GM12878 (cell line): ENCODE measurements at regions of chr1 and their contacts with region 1.

Region 1: GRCh38 chr1:17119076-17119772 is at the start of gene PADI2:
- DNase-seq: no peak
- ATAC-seq: peak; percentile 93
- H3K4me3 ChIP-seq: peak within 1 kb of the TSS; percentile 63
- H3K27ac ChIP-seq: no peak within 1 kb of the TSS
- H3K4me1 ChIP-seq: peaks cover 8% of the 10 kb centered on the region; the same call in 1 of the 2 replicates
- H3K27me3 ChIP-seq: peaks cover 9 to 11% of the 10 kb centered on the region in 2 experiments; a peak in 3 of 4 replicates
- CTCF ChIP-seq: no peak
- EP300 ChIP-seq: no peak
- POLR2A ChIP-seq: no peak
- RAD21 ChIP-seq: no peak
- polyA plus RNA-seq, gene PADI2: 0.05 to 0.09 TPM

Region 2: DNA sequence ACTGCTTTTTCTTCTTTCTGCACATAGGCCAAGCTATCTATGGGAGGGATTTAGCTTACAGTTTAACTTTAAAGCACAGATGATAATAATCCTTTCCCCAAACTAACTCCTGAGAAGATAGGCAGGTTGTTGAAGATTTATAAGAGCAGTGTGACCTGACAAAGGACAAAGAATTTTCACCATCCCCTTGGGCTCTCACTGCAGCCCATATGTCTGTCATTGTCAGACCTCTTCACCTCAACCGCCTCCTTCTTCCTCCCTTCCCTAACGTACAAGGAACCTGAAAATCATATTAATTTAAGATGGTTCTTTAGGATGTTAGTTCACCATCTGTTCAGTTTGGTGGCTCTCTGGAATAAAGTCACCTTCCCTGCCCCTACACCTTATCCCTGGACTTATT is 218.5 kb before region 1 on chr1:
- CTCF ChIA-PET with region 1: no interaction called
- POLR2A ChIA-PET with region 1: no interaction called
- RAD21 ChIA-PET with region 1: no interaction called
- SMC1A ChIA-PET with region 1: no interaction called
- in situ Hi-C with region 1: no loop called
- intact Hi-C with region 1: no loop called
- DNase-seq: no peak
- ATAC-seq: no peak
- H3K4me3 ChIP-seq: no peak overlapping the region
- H3K27ac ChIP-seq: no peak overlapping the region
- H3K4me1 ChIP-seq: peaks cover 13% of the 10 kb centered on the region
- H3K27me3 ChIP-seq: no peaks in the 10 kb centered on the region
- CTCF ChIP-seq: no peak
- EP300 ChIP-seq: no peak
- POLR2A ChIP-seq: no peak
- RAD21 ChIP-seq: no peak

Region 3: DNA sequence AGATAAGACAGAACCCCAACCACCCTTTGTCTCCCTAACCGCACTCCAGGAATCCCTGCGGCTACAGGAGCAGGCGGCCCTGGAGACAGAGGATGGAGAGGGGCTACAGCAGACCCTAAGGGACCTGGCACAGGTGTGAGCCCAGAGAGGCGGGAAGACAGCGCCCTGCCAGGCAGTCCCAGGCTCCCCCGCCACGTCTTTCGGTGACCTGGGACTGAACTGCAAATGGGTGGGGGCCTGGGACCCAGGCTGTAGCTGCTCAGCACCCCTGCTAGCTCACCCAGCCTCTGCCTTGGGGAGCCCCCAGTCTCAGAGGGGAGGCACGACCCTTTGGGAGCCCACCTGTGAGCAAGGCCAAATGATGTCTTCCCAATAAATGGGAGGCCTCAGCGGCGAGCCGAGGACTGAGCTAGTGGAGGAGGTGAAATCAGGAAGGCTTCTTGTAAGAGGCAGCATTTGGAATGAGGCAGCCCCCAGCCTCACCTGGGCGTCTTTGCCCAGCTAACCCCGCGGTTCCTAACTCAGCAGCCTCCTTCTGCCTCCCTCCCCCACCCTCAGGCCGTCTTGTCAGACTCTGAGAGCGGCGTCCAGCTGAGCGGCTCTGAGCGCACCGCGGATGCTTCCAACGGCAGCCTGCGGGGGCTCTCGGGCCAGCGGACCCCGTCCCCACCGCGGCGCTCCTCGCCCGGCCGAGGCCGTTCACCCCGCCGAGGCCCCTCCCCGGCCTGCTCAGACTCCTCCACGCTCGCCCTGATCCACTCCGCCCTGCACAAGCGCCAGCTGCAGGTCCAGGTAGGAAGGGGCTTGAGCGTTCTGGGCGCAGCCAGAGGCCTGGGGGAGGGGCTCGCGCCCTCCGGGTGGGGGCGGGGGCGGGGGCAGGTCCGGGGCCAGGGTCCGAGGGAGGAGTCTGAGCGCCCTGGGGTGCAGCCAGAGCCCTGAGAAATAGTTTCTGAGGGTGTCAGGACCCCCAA is 180.6 kb before region 1 on chr1:
- CTCF ChIA-PET with region 1: no interaction called
- POLR2A ChIA-PET with region 1: no interaction called
- RAD21 ChIA-PET with region 1: no interaction called
- SMC1A ChIA-PET with region 1: no interaction called
- in situ Hi-C with region 1: no loop called
- intact Hi-C with region 1: no loop called
- DNase-seq: no peak
- ATAC-seq: no peak
- H3K4me3 ChIP-seq: no peak overlapping the region
- H3K27ac ChIP-seq: no peak overlapping the region
- H3K4me1 ChIP-seq: no peaks in the 10 kb centered on the region
- H3K27me3 ChIP-seq: no peaks in the 10 kb centered on the region
- CTCF ChIP-seq: no peak
- EP300 ChIP-seq: no peak
- POLR2A ChIP-seq: no peak
- RAD21 ChIP-seq: no peak

Region 4: DNA sequence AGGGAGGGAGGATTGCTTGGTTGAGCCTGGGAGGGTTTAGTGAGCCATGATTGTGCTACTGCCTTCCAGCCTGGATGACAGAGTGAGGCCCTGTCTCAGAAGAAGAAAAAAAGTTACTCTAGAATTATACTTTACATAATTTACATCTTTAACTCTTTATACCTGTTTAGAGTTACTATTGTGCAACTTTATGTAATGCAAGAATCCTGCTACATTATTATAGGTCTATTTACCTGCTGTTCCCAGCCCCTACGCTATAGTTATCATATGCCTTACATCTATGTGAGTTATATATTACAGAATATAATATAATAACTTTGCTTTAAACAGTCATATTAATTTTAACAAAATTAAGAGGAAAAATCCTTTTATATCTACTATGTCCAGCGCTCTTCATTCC is 79.7 kb before region 1 on chr1:
- CTCF ChIA-PET with region 1: no interaction called
- POLR2A ChIA-PET with region 1: no interaction called
- RAD21 ChIA-PET with region 1: no interaction called
- SMC1A ChIA-PET with region 1: no interaction called
- in situ Hi-C with region 1: no loop called
- intact Hi-C with region 1: no loop called
- DNase-seq: no peak
- ATAC-seq: no peak
- H3K4me3 ChIP-seq: no peak overlapping the region
- H3K27ac ChIP-seq: no peak overlapping the region
- H3K4me1 ChIP-seq: no peaks in the 10 kb centered on the region
- H3K27me3 ChIP-seq: no peaks in the 10 kb centered on the region
- CTCF ChIP-seq: no peak
- EP300 ChIP-seq: no peak
- POLR2A ChIP-seq: no peak
- RAD21 ChIP-seq: no peak

Region 5: GRCh38 chr1:17059739-17060460 is 59.3 kb before region 1 on chr1:
- CTCF ChIA-PET with region 1: interaction called, 171 read pairs
- POLR2A ChIA-PET with region 1: interaction called, 3 read pairs
- RAD21 ChIA-PET with region 1: interaction called, 53 read pairs
- SMC1A ChIA-PET with region 1: interaction called, 93 read pairs
- in situ Hi-C with region 1: loop called (anchors 5 kb)
- intact Hi-C with region 1: loop called (anchors 1 kb)
- DNase-seq: peak; percentile 30
- ATAC-seq: peak; percentile 100
- H3K4me3 ChIP-seq: no peak overlapping the region
- H3K27ac ChIP-seq: no peak overlapping the region
- H3K4me1 ChIP-seq: peaks cover 6% of the 10 kb centered on the region; the same call in 1 of the 2 replicates
- H3K27me3 ChIP-seq: no peaks in the 10 kb centered on the region
- CTCF ChIP-seq: peak; percentile 80 to 93 (median 81)
- EP300 ChIP-seq: no peak
- POLR2A ChIP-seq: no peak
- RAD21 ChIP-seq: peak; percentile 66

Region 6: DNA sequence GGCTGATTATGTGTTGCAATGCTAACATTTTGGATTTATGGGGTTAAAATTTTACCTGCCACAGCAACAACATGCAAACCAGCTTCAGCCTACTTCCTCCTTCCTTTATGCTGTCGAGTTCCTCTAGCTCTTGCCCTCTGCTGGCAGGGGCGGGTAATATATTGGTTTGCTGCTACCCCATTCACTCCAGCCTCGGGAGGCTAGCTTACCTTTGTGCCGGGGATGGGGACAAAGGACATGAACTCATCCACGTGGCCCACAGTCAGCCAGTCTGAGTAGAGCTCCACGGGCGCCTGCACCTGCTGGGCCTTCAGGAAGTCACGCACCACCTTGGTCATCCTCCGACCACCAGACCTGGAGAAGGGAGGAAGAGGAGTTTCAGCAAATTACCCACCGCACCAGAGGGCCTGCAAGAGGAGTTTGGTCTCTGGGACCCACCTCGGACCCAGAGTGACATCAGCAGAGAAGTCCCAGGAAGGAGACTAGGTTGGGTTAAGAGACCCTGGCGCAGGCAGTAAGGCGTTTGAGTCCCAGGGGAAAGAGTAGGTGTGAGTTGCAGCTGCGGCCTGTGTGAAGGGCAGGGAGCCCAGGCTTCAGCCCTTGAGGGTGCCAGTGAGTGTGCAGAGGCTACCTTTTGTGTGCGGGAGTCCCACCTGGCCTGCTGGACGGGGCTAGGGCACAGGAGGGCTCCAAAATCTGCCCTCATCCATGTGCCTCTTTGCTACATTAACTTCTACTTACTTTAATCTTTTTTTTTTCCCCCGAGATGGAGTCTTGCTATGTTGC is 43.6 kb before region 1 on chr1:
- CTCF ChIA-PET with region 1: interaction called, 4 read pairs
- POLR2A ChIA-PET with region 1: interaction called, 12 read pairs
- RAD21 ChIA-PET with region 1: interaction called, 8 read pairs
- SMC1A ChIA-PET with region 1: interaction called, 4 read pairs
- in situ Hi-C with region 1: no loop called
- intact Hi-C with region 1: loop called (anchors 5 kb)
- DNase-seq: no peak
- ATAC-seq: peak; percentile 92
- H3K4me3 ChIP-seq: no peak overlapping the region
- H3K27ac ChIP-seq: no peak overlapping the region
- H3K4me1 ChIP-seq: peaks cover 5% of the 10 kb centered on the region
- H3K27me3 ChIP-seq: no peaks in the 10 kb centered on the region
- CTCF ChIP-seq: peak; percentile 1 to 65 (median 41); a peak in 3 of 6 replicates
- EP300 ChIP-seq: no peak
- POLR2A ChIP-seq: no peak
- RAD21 ChIP-seq: 0 out of 2 replicates have a peak, but pooled peaks have one; percentile 14

Region 7: GRCh38 chr1:17080880-17081279 is 38.3 kb before region 1 on chr1:
- CTCF ChIA-PET with region 1: interaction called, 4 read pairs
- POLR2A ChIA-PET with region 1: interaction called, 12 read pairs
- RAD21 ChIA-PET with region 1: interaction called, 8 read pairs
- SMC1A ChIA-PET with region 1: interaction called, 4 read pairs
- in situ Hi-C with region 1: no loop called
- intact Hi-C with region 1: loop called (anchors 5 kb)
- DNase-seq: no peak
- ATAC-seq: no peak
- H3K4me3 ChIP-seq: no peak overlapping the region
- H3K27ac ChIP-seq: no peak overlapping the region
- H3K4me1 ChIP-seq: peaks cover 14% of the 10 kb centered on the region
- H3K27me3 ChIP-seq: 0 out of 4 replicates have a peak, but pooled peaks cover 0 to 1% of the 10 kb centered on the region in 2 experiments
- CTCF ChIP-seq: no peak
- EP300 ChIP-seq: no peak
- POLR2A ChIP-seq: no peak
- RAD21 ChIP-seq: no peak

Region 8: DNA sequence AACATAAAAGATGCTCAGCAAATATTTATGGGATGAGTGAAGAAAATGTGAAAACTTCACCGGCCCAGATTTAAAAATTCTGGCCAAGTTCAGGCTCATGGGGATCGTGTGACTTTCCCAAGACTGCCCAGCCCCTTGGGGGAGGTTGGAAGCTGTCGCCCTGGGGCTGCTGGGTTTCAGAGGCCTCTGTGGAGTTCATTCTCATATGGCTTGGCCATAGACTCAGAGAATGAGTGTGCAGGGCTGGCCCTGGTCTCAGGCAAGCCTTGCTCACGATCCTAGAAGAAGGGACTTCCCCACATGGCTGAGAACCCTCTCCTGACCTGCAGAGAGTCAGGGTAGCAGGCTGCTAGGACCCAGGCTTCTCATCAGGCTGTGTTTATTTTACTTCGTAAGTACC is 24.6 kb before region 1 on chr1:
- CTCF ChIA-PET with region 1: no interaction called
- POLR2A ChIA-PET with region 1: interaction called, 12 read pairs
- RAD21 ChIA-PET with region 1: interaction called, 8 read pairs
- SMC1A ChIA-PET with region 1: interaction called, 16 read pairs
- in situ Hi-C with region 1: no loop called
- intact Hi-C with region 1: no loop called
- DNase-seq: peak; percentile 35
- ATAC-seq: peak; percentile 94
- H3K4me3 ChIP-seq: no peak overlapping the region
- H3K27ac ChIP-seq: no peak overlapping the region
- H3K4me1 ChIP-seq: no peaks in the 10 kb centered on the region
- H3K27me3 ChIP-seq: no peaks in the 10 kb centered on the region; a peak in 1 of 4 replicates
- CTCF ChIP-seq: no peak
- EP300 ChIP-seq: no peak; a peak in 1 of 4 replicates
- POLR2A ChIP-seq: no peak
- RAD21 ChIP-seq: no peak

Region 9: DNA sequence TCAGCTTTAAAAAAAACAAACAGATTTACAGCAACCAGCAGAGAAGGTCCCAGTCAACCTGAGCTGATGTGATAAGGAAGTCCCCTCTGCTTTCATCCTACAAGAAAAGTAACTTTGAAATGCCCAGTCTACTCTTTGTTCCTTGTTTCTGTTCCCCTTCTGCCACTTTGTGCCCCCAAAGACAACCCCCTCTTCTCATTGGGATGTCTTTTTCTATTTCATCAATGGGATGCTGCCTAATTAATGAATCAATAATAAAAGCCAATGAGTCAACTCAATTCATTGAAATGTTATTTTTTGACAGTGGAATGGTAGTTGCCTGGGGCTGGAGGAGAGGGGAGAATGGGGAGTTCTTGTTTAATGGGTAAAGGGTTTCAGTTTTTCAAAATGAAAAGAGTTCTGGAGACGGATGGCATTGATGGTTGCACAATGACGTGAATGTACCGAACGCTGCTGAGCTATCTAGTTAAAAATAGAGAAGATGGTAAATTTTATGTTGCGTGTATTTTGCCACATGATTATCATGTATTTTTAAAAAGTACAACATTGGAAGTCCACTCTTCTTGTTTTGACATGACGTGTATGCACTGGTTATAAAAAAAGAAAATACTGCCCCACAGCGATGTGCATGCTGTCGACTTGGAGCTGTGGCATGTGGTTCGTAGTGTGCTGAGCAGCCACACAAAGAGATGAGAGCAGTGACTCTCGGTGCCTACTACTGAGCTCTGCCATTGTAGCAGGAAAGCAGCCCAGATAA is 22.4 kb after region 1 on chr1:
- CTCF ChIA-PET with region 1: interaction called, 105 read pairs
- POLR2A ChIA-PET with region 1: interaction called, 23 read pairs
- RAD21 ChIA-PET with region 1: interaction called, 58 read pairs
- SMC1A ChIA-PET with region 1: interaction called, 119 read pairs
- in situ Hi-C with region 1: no loop called
- intact Hi-C with region 1: no loop called
- DNase-seq: peak; percentile 85
- ATAC-seq: peak; percentile 90
- H3K4me3 ChIP-seq: no peak overlapping the region
- H3K27ac ChIP-seq: peak overlapping the region; percentile 78
- H3K4me1 ChIP-seq: peaks cover 15% of the 10 kb centered on the region
- H3K27me3 ChIP-seq: no peaks in the 10 kb centered on the region
- CTCF ChIP-seq: peak in 1 of 3 experiments; percentile 32; a peak in 1 of 6 replicates
- EP300 ChIP-seq: peak; percentile 45 to 84; a peak in 2 of 4 replicates
- POLR2A ChIP-seq: no peak; the same call in 1 of the 2 replicates
- RAD21 ChIP-seq: 0 out of 2 replicates have a peak, but pooled peaks have one; percentile 5

Region 10: DNA sequence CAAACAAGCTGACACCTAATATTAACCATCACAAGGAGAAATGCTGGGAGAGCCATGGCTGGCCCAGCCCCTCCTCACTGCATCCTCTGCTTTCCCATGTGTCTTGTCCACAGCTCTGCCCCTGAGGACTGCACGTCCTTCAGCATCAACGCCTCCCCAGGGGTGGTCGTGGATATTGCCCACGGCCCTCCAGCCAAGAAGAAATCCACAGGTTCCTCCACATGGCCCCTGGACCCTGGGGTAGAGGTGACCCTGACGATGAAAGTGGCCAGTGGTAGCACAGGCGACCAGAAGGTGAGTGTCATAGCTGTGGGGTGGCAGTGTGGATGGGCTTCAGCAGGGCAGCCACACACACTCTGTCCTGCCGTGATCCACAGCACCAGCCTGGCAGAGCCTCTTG is 211.6 kb after region 1 on chr1:
- CTCF ChIA-PET with region 1: interaction called, 27 read pairs
- POLR2A ChIA-PET with region 1: no interaction called
- RAD21 ChIA-PET with region 1: interaction called, 3 read pairs
- SMC1A ChIA-PET with region 1: interaction called, 6 read pairs
- in situ Hi-C with region 1: loop called (anchors 5 kb)
- intact Hi-C with region 1: loop called (anchors 2 kb)
- DNase-seq: no peak
- ATAC-seq: no peak
- H3K4me3 ChIP-seq: no peak overlapping the region
- H3K27ac ChIP-seq: no peak overlapping the region
- H3K4me1 ChIP-seq: no peaks in the 10 kb centered on the region
- H3K27me3 ChIP-seq: peaks cover 0 to 6% of the 10 kb centered on the region in 2 experiments; a peak in 2 of 4 replicates
- CTCF ChIP-seq: no peak
- EP300 ChIP-seq: no peak
- POLR2A ChIP-seq: no peak
- RAD21 ChIP-seq: no peak